Ascending aorta (tissue), 2 donors: ENCODE measurements at regions of chr12 and their contacts with region 1.

Region 1: GRCh38 chr12:132956011-132956788 is at the start of gene ZNF605:
- DNase-seq: peak; percentile 41 to 91
- H3K4me3 ChIP-seq: peak within 1 kb of the TSS; percentile 80 to 98
- H3K27ac ChIP-seq: peak within 1 kb of the TSS; percentile 89 to 92
- H3K4me1 ChIP-seq: peaks cover 0 to 2% of the 10 kb centered on the region in 2 donors
- H3K27me3 ChIP-seq: no peaks in the 10 kb centered on the region
- CTCF ChIP-seq: no peak
- total RNA-seq, gene ZNF605: 1.3 TPM

Region 2: GRCh38 chr12:132908145-132909044 is 47.8 kb before region 1 on chr12:
- intact Hi-C with region 1: loop called (anchors 2 kb)
- DNase-seq: peak; percentile 83 to 96
- H3K4me3 ChIP-seq: peak overlapping the region; percentile 79 to 86
- H3K27ac ChIP-seq: peak overlapping the region; percentile 83 to 85
- H3K4me1 ChIP-seq: peaks cover 0 to 6% of the 10 kb centered on the region in 2 donors
- H3K27me3 ChIP-seq: no peaks in the 10 kb centered on the region
- CTCF ChIP-seq: no peak